Endothelial cell of umbilical vein (primary cell): ENCODE measurements at regions of chrX and their contacts with region 1.

Region 1: GRCh38 chrX:77446029-77446585 is 1.1 kb upstream of the FGF16 start:
- DNase-seq: peak; percentile 86
- H3K4me3 ChIP-seq: peak overlapping the region in 1 of 3 experiments; percentile 0
- H3K27ac ChIP-seq: peak overlapping the region; percentile 62
- H3K4me1 ChIP-seq: peaks cover 79% of the 10 kb centered on the region
- H3K27me3 ChIP-seq: no peaks in the 10 kb centered on the region
- CTCF ChIP-seq: peak; percentile 26 to 53
- POLR2A ChIP-seq: no peak

Region 2: GRCh38 chrX:77087529-77088169 is 358.5 kb before region 1 on chrX:
- CTCF ChIA-PET with region 1: interaction called, 3 read pairs
- POLR2A ChIA-PET with region 1: no interaction called
- dilution Hi-C with region 1: no loop called
- intact Hi-C with region 1: loop called (anchors 1 kb)
- DNase-seq: peak; percentile 90
- H3K4me3 ChIP-seq: no peak overlapping the region
- H3K27ac ChIP-seq: peak overlapping the region; percentile 74
- H3K4me1 ChIP-seq: peaks cover 27% of the 10 kb centered on the region
- H3K27me3 ChIP-seq: no peaks in the 10 kb centered on the region
- CTCF ChIP-seq: no peak
- POLR2A ChIP-seq: no peak

Region 3: DNA sequence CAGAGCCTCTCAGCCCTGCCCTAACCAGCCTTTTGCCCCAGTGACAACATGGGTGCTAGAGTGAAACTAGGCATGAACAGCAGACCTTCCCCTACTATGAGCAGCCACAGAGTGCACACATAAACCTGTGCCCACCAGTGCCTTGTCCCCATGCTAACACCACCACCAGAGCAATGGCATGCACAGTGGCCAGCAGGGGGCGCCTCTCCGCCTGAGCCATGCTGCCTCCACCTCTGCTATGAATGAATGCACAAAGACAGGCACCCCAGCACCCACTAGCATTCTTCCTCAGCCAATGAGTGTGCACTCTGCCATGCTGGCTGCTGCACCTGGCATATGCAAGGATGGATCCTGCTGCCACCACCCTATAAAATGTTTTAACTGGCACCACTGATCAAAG is 285.8 kb before region 1 on chrX:
- CTCF ChIA-PET with region 1: no interaction called
- POLR2A ChIA-PET with region 1: no interaction called
- dilution Hi-C with region 1: no loop called
- intact Hi-C with region 1: loop called (anchors 2 kb)
- DNase-seq: no peak
- H3K4me3 ChIP-seq: no peak overlapping the region
- H3K27ac ChIP-seq: no peak overlapping the region
- H3K4me1 ChIP-seq: no peaks in the 10 kb centered on the region
- H3K27me3 ChIP-seq: no peaks in the 10 kb centered on the region
- CTCF ChIP-seq: peak; percentile 32 to 51
- POLR2A ChIP-seq: no peak

Region 4: GRCh38 chrX:77505227-77505626 is 59.1 kb after region 1 on chrX:
- CTCF ChIA-PET with region 1: no interaction called
- POLR2A ChIA-PET with region 1: no interaction called
- dilution Hi-C with region 1: no loop called
- intact Hi-C with region 1: loop called (anchors 2 kb)
- DNase-seq: peak; percentile 61
- H3K4me3 ChIP-seq: no peak overlapping the region
- H3K27ac ChIP-seq: no peak overlapping the region
- H3K4me1 ChIP-seq: peaks cover 15% of the 10 kb centered on the region
- H3K27me3 ChIP-seq: no peaks in the 10 kb centered on the region
- CTCF ChIP-seq: no peak
- POLR2A ChIP-seq: no peak

Region 5: GRCh38 chrX:77597090-77597489 is 151.0 kb after region 1 on chrX:
- CTCF ChIA-PET with region 1: no interaction called
- POLR2A ChIA-PET with region 1: no interaction called
- dilution Hi-C with region 1: no loop called
- intact Hi-C with region 1: loop called (anchors 2 kb)
- DNase-seq: peak; percentile 41
- H3K4me3 ChIP-seq: no peak overlapping the region
- H3K27ac ChIP-seq: no peak overlapping the region
- H3K4me1 ChIP-seq: no peaks in the 10 kb centered on the region
- H3K27me3 ChIP-seq: no peaks in the 10 kb centered on the region
- CTCF ChIP-seq: peak in 1 of 2 donors; percentile 14
- POLR2A ChIP-seq: no peak

Region 6: GRCh38 chrX:77945910-77946545 is 499.9 kb after region 1 on chrX:
- CTCF ChIA-PET with region 1: no interaction called
- POLR2A ChIA-PET with region 1: no interaction called
- dilution Hi-C with region 1: no loop called
- intact Hi-C with region 1: no loop called
- DNase-seq: no peak
- H3K4me3 ChIP-seq: no peak overlapping the region
- H3K27ac ChIP-seq: no peak overlapping the region
- H3K4me1 ChIP-seq: peaks cover 2% of the 10 kb centered on the region
- H3K27me3 ChIP-seq: no peaks in the 10 kb centered on the region
- CTCF ChIP-seq: no peak
- POLR2A ChIP-seq: no peak

Region 7: DNA sequence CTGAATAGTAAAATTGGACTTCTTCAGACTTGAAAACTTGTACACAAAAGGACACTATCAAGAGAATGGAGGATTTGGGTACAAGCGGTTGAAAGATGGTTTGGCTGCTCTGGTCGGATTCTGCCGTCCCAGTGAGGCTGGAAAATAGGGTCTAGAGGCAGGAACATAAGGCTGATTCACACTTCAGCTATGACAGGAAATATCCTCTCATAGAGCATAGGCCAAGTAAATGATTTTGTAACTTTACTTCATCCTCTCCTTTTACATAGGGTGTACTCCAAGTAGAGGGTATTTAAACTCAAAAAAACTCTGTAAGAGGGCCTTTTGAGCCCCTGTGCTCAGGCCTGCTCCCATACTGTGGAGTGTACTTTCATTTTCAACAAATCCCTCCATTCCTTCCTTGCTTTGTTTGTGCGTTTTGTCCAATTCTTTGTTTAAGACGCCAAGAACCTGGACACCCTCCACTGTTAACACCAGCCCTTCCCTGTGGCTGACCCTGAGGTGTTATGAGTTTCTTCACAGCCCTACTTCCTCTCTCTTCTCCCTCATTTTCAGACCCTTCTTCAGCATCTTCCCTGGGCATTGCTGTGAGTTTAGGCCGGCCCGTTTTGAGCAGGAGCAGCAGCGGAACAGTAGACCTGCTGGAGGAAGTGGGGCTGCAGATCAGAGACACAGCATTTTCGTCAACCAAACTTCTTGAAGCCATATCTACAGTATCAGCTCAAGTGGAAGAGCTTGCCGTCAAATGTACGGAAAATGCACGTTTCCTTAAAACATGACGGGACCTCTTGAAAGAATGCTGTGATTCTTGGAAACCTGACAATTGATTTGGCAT is 516.2 kb after region 1 on chrX:
- CTCF ChIA-PET with region 1: no interaction called
- POLR2A ChIA-PET with region 1: no interaction called
- dilution Hi-C with region 1: no loop called
- intact Hi-C with region 1: loop called (anchors 5 kb)
- DNase-seq: peak; percentile 52
- H3K4me3 ChIP-seq: peak overlapping the region in 1 of 3 experiments; percentile 11
- H3K27ac ChIP-seq: peak overlapping the region; percentile 78
- H3K4me1 ChIP-seq: peaks cover 19% of the 10 kb centered on the region
- H3K27me3 ChIP-seq: no peaks in the 10 kb centered on the region
- CTCF ChIP-seq: no peak
- POLR2A ChIP-seq: no peak

Region 8: GRCh38 chrX:77979870-77980269 is 533.8 kb after region 1 on chrX:
- CTCF ChIA-PET with region 1: no interaction called
- POLR2A ChIA-PET with region 1: no interaction called
- dilution Hi-C with region 1: no loop called
- intact Hi-C with region 1: no loop called
- DNase-seq: no peak
- H3K4me3 ChIP-seq: no peak overlapping the region
- H3K27ac ChIP-seq: no peak overlapping the region
- H3K4me1 ChIP-seq: no peaks in the 10 kb centered on the region
- H3K27me3 ChIP-seq: no peaks in the 10 kb centered on the region
- CTCF ChIP-seq: no peak
- POLR2A ChIP-seq: no peak

Region 9: DNA sequence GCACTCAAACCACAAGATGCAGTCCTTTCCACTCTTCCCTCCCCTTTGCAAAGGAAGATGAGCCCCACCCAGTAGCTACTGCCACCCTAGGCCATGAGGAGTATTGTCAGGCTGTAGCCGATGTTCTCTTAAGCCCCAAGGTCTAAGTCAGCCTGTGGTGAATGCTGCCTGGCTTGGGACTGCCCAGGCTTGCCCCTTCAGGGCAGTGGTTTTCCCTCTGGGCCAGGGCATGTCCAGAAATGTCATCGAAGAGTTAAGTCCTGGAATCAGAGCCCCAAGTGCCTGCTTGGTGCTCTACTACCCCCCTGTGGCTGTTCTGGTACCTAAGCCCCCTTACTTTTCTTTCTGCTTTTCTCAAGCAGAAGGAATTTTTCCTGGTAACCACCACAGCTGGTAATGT is 646.2 kb after region 1 on chrX:
- CTCF ChIA-PET with region 1: no interaction called
- POLR2A ChIA-PET with region 1: no interaction called
- dilution Hi-C with region 1: no loop called
- intact Hi-C with region 1: loop called (anchors 2 kb)
- DNase-seq: peak; percentile 45
- H3K4me3 ChIP-seq: no peak overlapping the region
- H3K27ac ChIP-seq: no peak overlapping the region
- H3K4me1 ChIP-seq: no peaks in the 10 kb centered on the region
- H3K27me3 ChIP-seq: peaks cover 0 to 2% of the 10 kb centered on the region in 2 experiments
- CTCF ChIP-seq: peak; percentile 15 to 46
- POLR2A ChIP-seq: no peak